Dorsolateral prefrontal cortex (tissue), 120 donors: ENCODE measurements at regions of chr5 and their contacts with region 1.

Region 1: DNA sequence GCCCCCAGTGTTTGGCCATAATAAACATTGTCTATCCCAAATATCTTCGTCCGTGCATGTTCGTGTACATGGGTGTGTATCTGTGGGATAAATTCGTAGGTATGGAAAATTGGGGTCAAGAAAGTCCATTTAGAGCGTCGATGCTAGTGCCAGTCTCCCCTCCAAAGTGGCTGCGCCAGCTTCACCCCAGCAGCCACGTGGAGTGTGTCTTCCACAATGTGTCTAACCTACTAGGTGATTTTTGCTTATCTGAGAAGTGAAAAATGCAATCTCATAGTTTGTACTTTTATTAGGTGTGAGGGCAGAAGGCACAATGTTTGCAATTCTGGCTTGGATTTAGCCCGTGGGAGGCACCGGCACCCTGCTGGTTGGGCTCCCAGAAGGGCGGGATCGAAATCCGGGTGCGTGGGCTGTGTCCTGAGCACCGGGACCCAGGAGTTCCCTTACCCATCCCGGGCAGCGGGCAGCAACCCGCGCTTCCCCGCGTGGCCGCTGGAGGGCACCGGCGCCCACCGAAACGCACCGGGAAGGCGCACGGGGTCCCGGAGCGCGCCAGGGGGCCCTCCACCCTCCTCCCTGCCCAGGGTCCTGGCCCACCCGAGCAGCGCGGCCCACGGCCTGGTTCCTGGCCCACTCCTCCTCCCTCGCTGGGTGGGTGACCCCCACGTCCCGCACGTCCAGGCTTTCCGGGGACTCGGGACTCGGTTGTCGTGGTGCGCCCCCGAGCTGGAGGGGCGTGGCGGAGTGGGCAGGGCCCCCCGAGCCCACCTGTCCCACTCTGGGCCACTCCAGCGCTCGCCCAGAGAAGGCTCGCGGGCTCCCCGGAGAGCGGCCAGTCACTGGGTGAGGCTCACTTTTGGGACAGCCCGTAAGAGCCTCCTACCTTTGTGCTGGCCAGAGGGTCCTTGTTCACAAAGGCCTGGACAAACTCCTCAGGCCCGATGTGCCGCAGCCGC is 55.4 kb upstream of the RNF130 start:
- DNase-seq: peak in 6 of 10 donors; percentile 29 to 77 (median 50)
- H3K4me3 ChIP-seq: peak overlapping the region in 5 of 59 donors; percentile 2 to 33 (median 11)
- H3K27ac ChIP-seq: peak overlapping the region in 13 of 59 donors; percentile 1 to 87 (median 77)
- H3K27me3 ChIP-seq: no peaks in the 10 kb centered on the region
- CTCF ChIP-seq: peak; percentile 61 to 94 (median 87)

Region 2: GRCh38 chr5:180161420-180162303 is 34.7 kb after region 1 on chr5:
- intact Hi-C with region 1: loop called in 1 of 2 experiments (anchors 5 kb)
- DNase-seq: peak in 7 of 10 donors; percentile 47 to 80 (median 74)
- H3K4me3 ChIP-seq: peak overlapping the region in 17 of 59 donors; percentile 4 to 33 (median 13)
- H3K27ac ChIP-seq: peak overlapping the region in 44 of 59 donors; percentile 2 to 93 (median 54)
- H3K27me3 ChIP-seq: no peaks in the 10 kb centered on the region
- CTCF ChIP-seq: peak in 53 of 56 donors; percentile 11 to 84 (median 55)

Region 3: DNA sequence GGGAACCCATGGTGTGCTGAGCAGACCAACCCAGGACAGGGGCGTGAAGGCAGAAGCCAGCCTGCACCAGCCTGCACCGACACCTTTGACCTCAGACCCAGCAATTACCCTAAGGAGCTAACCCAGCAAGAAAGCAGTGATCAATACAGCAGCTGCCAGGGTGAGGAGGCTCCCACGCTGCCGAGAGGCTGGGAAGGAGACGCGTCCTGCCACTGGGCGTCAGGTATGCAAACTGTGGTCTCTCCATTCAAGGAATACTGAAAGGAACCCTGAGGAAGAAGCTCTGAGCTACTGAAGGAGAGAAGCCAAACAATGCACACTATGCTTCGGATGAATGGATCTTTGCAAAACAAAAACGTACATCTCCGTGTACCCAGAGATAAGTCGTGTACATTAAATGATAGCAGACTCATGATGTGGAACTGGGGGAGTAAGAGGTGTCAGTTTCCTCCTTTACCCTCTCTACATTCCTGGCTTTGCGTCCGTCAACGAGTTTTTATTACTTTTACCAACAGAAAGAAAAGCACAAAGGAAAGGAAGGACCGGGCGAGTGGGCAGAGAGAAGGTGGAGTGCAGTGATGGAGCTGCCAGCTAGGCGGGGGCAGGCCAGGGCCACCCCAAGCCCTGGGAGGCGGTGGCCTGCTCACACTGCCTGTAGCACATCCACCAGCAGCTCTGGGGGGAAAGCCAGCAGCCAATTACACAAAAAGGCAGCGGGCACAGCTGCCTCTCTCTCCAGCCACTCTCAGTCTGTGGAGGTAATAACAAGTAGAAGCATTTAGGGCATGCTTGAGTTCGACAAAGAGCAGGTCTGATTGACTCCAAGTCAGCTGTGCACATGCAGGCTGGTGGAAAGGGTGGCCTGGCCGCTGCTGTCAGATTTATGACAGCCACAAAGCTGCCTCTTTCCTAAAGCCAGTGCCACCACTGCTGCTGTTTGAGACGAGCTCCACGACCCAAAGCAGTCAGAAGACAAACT is 52.7 kb after region 1 on chr5:
- intact Hi-C with region 1: loop called in 1 of 2 experiments (anchors 5 kb)
- DNase-seq: peak in 3 of 10 donors; percentile 47 to 56 (median 50)
- H3K4me3 ChIP-seq: peak overlapping the region in 8 of 59 donors; percentile 3 to 27 (median 8)
- H3K27ac ChIP-seq: peak overlapping the region in 57 of 59 donors; percentile 2 to 96 (median 76)
- H3K27me3 ChIP-seq: no peaks in the 10 kb centered on the region
- CTCF ChIP-seq: peak in 1 of 56 donors; percentile 8

Region 4: GRCh38 chr5:180284149-180284548 is 157.1 kb after region 1 on chr5:
- intact Hi-C with region 1: loop called in 1 of 2 experiments (anchors 5 kb)
- DNase-seq: peak; percentile 46 to 77 (median 71)
- H3K4me3 ChIP-seq: peak overlapping the region in 1 of 59 donors; percentile 15
- H3K27ac ChIP-seq: peak overlapping the region in 12 of 59 donors; percentile 7 to 51 (median 39)
- H3K27me3 ChIP-seq: no peaks in the 10 kb centered on the region
- CTCF ChIP-seq: peak in 52 of 56 donors; percentile 35 to 74 (median 53)

Region 5: DNA sequence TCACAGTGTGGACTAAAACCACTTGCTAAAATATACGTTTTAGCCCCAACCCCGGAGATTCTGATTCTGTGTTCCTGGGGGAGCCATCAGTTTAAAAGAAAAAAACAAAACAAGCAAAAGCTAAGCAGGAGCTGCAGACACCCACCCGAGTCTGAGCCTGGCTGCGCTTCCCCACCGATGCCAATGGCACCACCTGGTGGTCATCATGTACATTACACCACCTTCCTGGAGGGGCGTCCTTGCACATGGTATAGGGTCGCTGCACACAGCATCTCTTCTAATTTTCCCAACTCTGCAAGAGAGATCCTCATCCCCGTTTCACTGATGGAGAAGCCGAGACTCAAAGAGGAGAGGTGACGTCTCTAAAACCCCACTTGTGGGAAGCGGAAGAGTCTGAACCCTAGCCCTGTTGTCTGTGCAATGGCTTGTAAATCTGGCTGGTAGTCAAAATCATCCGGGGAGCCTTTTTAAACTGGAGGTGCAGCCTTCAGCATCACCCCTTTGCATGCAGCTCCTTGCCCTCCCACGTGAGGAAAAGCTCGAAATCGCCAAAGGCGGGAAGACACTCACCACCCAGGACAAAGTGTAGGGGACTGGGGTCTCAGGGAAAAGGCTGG is 344.1 kb after region 1 on chr5:
- intact Hi-C with region 1: loop called in 1 of 2 experiments (anchors 5 kb)
- DNase-seq: peak in 9 of 10 donors; percentile 41 to 82 (median 65)
- H3K4me3 ChIP-seq: no peak overlapping the region
- H3K27ac ChIP-seq: no peak overlapping the region
- H3K27me3 ChIP-seq: peaks cover 0 to 4% (median 0%) of the 10 kb centered on the region in 45 donors
- CTCF ChIP-seq: peak; percentile 84 to 98 (median 95)